ENCODE measurements at regions of chr10 and their contacts with region 1.

Region 1: DNA sequence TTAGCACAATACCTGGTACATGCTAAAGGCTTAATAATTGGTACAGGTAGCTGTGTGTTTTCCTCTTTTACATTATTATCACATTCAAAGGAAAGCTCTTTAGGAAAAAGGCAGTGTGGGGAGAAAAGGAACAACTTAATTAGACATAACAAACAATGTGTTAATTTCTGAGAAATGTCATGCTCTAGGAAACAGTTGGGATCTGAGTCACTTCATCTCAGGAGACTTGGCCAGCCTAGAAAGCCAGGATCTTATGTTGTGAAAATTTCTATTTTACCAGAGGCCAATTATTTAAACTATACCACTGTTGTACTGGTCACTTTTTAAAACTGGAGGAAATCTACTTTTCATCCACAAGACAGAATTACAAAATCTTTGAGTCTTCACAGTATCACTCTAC is 39.6 kb downstream of the ARMH3 start:
- H3K4me3 Mint-ChIP-seq: no peak overlapping the region
- H3K27ac Mint-ChIP-seq: no peak overlapping the region
- H3K4me1 Mint-ChIP-seq: peaks cover 17% of the 10 kb centered on the region
- H3K27me3 Mint-ChIP-seq: no peaks in the 10 kb centered on the region

Region 2: GRCh38 chr10:101920546-101920945 is 95.9 kb before region 1 on chr10:
- intact Hi-C with region 1: no loop called
- H3K4me3 Mint-ChIP-seq: no peak overlapping the region
- H3K27ac Mint-ChIP-seq: no peak overlapping the region
- H3K4me1 Mint-ChIP-seq: peaks cover 22% of the 10 kb centered on the region
- H3K27me3 Mint-ChIP-seq: no peaks in the 10 kb centered on the region

Region 3: DNA sequence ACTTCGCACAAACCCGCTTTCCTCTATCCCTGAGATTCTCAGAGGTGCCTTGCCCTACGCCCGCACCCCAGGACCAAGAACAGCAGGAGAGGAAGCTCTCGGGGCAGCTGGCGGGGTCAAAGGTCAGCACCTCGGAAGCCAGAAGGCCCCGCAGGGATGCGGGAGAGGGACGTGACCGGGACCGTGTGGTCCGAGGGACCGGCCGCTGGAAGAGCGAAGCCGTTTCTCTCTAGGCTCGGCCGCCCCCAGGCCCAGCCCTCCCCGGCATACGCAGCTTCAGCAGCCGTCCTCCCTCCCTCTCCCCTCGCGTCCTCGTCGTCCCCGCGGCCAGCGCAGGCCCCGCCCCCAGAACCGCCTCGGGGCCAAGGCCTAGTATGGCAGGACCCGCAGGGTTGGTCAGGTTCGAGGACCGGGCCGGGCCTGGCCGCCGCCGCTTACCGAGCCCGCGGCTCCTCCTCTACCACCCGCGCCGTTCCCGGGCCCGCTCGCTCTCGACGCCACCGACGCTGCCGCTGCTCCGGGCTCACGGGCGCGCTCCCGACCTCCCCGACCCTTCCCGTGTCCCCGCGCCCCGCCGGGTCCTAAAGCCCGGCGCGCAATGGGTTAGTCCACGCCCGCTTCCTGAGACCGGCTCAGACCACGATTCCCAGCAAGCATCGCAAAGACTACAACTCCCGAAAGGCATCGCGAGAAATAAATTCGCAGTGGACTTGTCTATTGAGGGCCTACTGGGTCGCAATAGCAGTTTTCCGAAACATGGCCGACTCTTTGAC is 39.4 kb after region 1 on chr10 and contains the start of gene ARMH3:
- intact Hi-C with region 1: loop called (anchors 5 kb)
- H3K4me3 Mint-ChIP-seq: peak within 1 kb of the TSS; percentile 93
- H3K27ac Mint-ChIP-seq: peak within 1 kb of the TSS; percentile 98
- H3K4me1 Mint-ChIP-seq: peaks cover 31% of the 10 kb centered on the region
- H3K27me3 Mint-ChIP-seq: no peaks in the 10 kb centered on the region

Measured in dendritic cell treated with granulocyte-macrophage colony-stimulating factor and Interleukin-4, amounts not matched to agents 40 ng/mL and 50 ng/mL, for 4 days (primary cell).